Activated CD4-positive, alpha-beta T cell treated with anti-CD3 and anti-CD28 coated beads, Interleukin-2, amount 10 ng/mL, durations not matched to agents 24 days and 14 days (primary cell): ENCODE measurements at regions of chr13 and their contacts with region 1.

Region 1: DNA sequence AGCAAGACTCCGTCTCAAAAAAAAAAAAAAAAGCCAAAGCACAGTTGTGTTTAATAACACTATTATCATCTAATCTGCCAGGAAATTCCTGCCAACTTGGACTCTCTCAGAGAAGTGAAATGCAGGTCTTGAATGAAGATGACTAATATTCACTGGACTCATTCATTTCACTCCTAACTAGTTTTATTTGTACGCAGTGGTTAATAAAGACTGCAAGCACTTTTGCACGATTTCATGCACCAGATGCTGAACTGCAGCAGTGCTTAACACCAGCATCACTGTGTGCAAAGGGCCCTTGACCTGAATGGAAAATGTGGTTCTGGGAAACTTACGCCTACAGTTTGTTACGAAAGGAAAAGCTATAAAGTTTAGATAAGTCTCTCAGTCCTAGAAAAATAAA is 63.3 kb downstream of the DHRS12 start:
- DNase-seq: no peak
- H3K4me3 Mint-ChIP-seq: peak overlapping the region; percentile 14
- H3K27ac Mint-ChIP-seq: no peak overlapping the region
- H3K4me1 Mint-ChIP-seq: peaks cover 22% of the 10 kb centered on the region
- H3K27me3 Mint-ChIP-seq: no peaks in the 10 kb centered on the region

Region 2: DNA sequence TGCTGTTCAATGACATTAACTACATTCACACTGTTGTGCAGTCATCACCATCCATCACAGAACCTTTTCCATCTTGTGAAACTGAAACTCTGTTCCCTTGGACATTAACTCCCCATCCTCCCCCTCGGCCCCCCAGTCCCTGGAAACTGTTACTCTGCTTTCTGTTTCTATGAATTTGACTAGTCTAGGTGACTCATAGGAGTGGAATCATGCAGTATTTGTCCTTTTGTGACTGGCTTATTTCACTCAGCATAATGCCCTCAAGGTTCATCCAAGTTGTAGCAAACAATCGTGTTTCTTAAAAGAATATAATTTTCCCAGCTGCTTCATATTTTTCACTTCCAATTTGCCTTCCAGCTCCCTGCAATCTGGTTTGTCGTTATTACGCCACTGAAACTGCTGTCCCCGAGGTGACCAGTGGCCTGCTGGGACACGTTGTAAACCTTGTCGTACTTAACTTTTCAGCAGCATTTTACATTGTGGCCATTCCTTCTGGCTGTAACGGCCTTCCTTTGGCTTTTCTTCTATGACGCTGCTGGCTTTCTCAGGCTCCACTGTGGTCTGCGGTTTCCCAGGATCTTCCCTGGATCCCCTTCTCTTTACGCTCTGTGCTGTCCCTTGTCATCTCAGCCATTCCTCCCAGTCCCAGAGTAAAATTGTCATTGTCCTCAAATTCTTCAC is 10.7 kb before region 1 on chr13:
- intact Hi-C with region 1: loop called (anchors 1 kb)
- DNase-seq: peak; percentile 74
- H3K4me3 Mint-ChIP-seq: no peak overlapping the region
- H3K27ac Mint-ChIP-seq: no peak overlapping the region
- H3K4me1 Mint-ChIP-seq: peaks cover 11% of the 10 kb centered on the region
- H3K27me3 Mint-ChIP-seq: no peaks in the 10 kb centered on the region

Region 3: GRCh38 chr13:51756651-51757050 is 16.0 kb after region 1 on chr13:
- intact Hi-C with region 1: no loop called
- DNase-seq: no peak
- H3K4me3 Mint-ChIP-seq: no peak overlapping the region
- H3K27ac Mint-ChIP-seq: no peak overlapping the region
- H3K4me1 Mint-ChIP-seq: no peaks in the 10 kb centered on the region
- H3K27me3 Mint-ChIP-seq: no peaks in the 10 kb centered on the region